ENCODE measurements at regions of chr10 and their contacts with region 1.

Region 1: GRCh38 chr10:43407576-43408330 is 1.2 kb downstream of the HNRNPF start:
- DNase-seq: peak; percentile 95
- H3K4me3 Mint-ChIP-seq: peak overlapping the region; percentile 96
- H3K27ac Mint-ChIP-seq: peak overlapping the region; percentile 99
- H3K4me1 Mint-ChIP-seq: peaks cover 32% of the 10 kb centered on the region
- H3K27me3 Mint-ChIP-seq: no peaks in the 10 kb centered on the region

Region 2: DNA sequence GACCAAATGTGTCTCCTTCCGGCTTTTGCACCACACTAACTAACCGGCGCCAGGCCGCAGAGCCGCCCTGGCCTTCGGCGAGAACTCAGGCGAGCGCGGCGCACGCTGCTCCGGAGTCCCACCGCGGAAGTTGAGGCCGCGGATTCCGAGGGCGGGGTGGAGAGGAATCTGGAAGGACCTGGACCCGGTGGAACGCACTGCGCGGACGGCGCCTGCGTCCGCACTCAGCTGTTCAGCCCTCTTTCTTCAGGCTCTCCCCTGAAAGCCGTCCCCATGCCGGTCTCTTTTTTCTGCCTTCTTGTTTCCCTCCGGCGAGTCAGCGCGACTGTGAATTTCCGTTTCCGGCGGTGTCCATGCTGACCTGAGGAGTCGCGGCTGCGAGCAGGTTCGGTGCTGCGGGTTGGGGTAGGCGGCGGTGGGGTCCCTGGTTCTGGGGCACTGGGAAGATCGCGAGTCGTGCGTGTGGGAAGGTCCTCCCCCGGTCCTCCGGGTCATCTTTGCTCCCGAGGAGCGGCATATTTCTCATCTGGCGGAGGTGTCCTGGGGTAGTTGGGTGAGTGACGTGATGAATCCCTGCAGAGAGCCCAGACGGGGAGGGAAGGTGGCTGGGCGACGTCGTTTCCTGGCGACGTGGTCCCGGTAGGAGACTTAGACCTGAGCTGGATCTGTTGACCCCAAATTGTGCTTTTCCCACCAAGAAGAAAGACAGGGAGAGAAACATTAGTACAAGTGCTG is 625.1 kb before region 1 on chr10 and contains the start of gene BMS1:
- intact Hi-C with region 1: loop called (anchors 2 kb)
- DNase-seq: peak; percentile 97
- H3K4me3 Mint-ChIP-seq: peak within 1 kb of the TSS; percentile 93
- H3K27ac Mint-ChIP-seq: peak within 1 kb of the TSS; percentile 96
- H3K4me1 Mint-ChIP-seq: peaks cover 18% of the 10 kb centered on the region
- H3K27me3 Mint-ChIP-seq: peaks cover 5% of the 10 kb centered on the region
- total RNA-seq, gene BMS1: 38.4 and 39.3 TPM in 2 replicates

Region 3: DNA sequence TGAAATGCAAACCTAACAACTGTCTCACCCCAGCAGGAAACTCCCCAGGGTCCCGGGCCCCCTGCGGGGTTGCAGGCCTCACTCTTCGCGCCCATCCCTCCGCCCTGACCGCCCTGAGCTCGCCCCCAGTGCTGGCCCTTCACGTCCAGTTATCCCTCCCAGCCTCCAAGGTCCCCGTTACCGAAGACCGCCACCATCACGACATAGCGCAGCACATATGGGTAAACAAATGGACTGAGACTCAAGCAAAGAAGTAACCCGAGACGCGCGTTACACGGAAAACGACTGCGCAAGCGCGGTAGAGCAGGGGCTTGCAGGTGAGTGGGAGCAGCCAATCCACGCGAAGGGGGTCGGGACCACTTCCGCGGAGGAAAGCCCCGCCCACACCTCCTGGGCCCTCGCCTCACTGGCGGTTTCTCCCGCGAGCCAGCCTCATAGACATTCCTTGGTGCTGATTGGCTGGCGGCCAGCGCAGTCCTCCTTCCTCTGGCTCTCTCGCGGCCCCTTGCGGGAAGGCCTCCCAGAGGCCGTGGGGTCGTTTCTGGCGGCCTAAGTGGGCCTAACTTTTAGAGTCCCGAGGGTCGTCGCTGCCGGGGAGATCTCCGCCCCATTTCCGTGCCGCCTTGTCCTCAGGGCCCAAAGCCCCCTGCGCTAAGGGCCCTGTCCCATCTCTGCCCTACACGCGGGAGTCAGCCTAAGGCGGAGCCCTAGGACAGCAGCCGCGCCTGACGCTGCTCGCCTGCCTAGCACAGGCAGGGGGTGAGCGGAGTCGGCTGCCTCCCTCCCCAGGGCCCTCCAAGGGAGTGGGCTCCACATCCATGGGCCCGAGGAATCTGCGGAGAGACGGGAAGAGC is 45.5 kb before region 1 on chr10:
- intact Hi-C with region 1: loop called (anchors 2 kb)
- DNase-seq: peak; percentile 99
- H3K4me3 Mint-ChIP-seq: peak overlapping the region; percentile 99
- H3K27ac Mint-ChIP-seq: peak overlapping the region; percentile 99
- H3K4me1 Mint-ChIP-seq: peaks cover 25% of the 10 kb centered on the region
- H3K27me3 Mint-ChIP-seq: no peaks in the 10 kb centered on the region

Region 4: GRCh38 chr10:43396928-43397624 is 10.7 kb before region 1 on chr10:
- intact Hi-C with region 1: loop called (anchors 1 kb)
- DNase-seq: peak; percentile 95
- H3K4me3 Mint-ChIP-seq: peak overlapping the region; percentile 90
- H3K27ac Mint-ChIP-seq: peak overlapping the region; percentile 93
- H3K4me1 Mint-ChIP-seq: peaks cover 72% of the 10 kb centered on the region
- H3K27me3 Mint-ChIP-seq: no peaks in the 10 kb centered on the region

Region 5: GRCh38 chr10:43420369-43421200 is 12.8 kb after region 1 on chr10:
- intact Hi-C with region 1: loop called (anchors 1 kb)
- DNase-seq: peak; percentile 95
- H3K4me3 Mint-ChIP-seq: peak overlapping the region; percentile 88
- H3K27ac Mint-ChIP-seq: peak overlapping the region; percentile 99
- H3K4me1 Mint-ChIP-seq: peaks cover 36% of the 10 kb centered on the region
- H3K27me3 Mint-ChIP-seq: no peaks in the 10 kb centered on the region

Region 6: DNA sequence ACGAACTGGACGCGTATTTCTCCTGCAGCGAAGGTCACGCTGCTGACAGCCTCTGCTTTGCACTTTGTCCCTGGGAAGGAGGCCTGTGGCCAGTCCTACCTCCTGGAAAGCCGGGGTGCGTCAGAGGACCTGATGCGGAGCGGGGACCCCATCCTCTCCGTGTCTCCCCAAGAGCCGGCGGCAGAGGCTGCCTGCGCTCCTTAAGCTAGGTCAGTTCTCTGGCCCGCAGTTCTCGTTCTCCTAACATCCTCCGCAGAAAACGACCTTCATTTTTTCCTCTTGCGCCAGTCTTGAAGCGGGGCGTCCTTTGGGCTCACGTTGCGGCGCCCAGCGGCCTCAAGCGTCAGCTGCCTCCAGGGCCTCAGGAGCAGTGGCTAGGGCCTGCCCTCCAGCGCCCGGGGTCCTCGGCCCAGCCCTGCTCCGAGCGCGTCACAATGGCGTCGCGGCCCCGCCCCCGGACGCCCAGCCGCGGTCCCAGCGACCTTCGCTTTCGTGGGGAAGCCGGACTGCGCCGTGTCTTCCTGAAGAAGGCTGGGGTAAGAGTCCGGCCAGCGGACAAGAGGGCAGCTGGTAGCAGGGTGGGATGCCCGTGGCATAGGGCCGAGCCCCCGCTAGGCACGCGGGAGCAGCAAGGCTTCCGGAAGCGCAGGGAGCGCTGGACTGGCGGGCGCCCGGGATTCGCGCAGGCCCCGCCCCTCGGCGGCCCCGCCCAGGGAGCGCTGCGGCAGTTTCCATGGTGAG is 28.8 kb after region 1 on chr10 and contains the start of gene ZNF487:
- intact Hi-C with region 1: loop called (anchors 1 kb)
- DNase-seq: peak; percentile 98
- H3K4me3 Mint-ChIP-seq: peak within 1 kb of the TSS; percentile 95
- H3K27ac Mint-ChIP-seq: peak within 1 kb of the TSS; percentile 99
- H3K4me1 Mint-ChIP-seq: peaks cover 13% of the 10 kb centered on the region
- H3K27me3 Mint-ChIP-seq: no peaks in the 10 kb centered on the region
- total RNA-seq, gene ZNF487: 1.5 and 1.6 TPM in 2 replicates